Panc1 (cell line): ENCODE measurements at regions of chr3 and their contacts with region 1.

Region 1: GRCh38 chr3:10010486-10011465 is 15.5 kb upstream of the FANCD2 start:
- DNase-seq: no peak
- ATAC-seq: peak; percentile 88
- H3K4me3 ChIP-seq: peak overlapping the region; percentile 57 to 69
- H3K27ac ChIP-seq: peak overlapping the region; percentile 57; the same call in 1 of the 2 replicates
- H3K4me1 ChIP-seq: peaks cover 11% of the 10 kb centered on the region
- H3K27me3 ChIP-seq: no peaks in the 10 kb centered on the region
- CTCF ChIP-seq: no peak

Region 2: GRCh38 chr3:10393514-10393913 is 382.7 kb after region 1 on chr3:
- CTCF ChIA-PET with region 1: no interaction called
- POLR2A ChIA-PET with region 1: interaction called, 14 read pairs
- in situ Hi-C with region 1: no loop called
- intact Hi-C with region 1: no loop called
- DNase-seq: no peak
- ATAC-seq: no peak
- H3K4me3 ChIP-seq: no peak overlapping the region
- H3K27ac ChIP-seq: no peak overlapping the region
- H3K4me1 ChIP-seq: no peaks in the 10 kb centered on the region
- H3K27me3 ChIP-seq: no peaks in the 10 kb centered on the region
- CTCF ChIP-seq: no peak